ENCODE measurements at regions of chr5 and their contacts with region 1.

Region 1: GRCh38 chr5:141878711-141879425 is 658 bp upstream of the PCDH1 start:
- DNase-seq: peak; percentile 95
- ATAC-seq: peak; percentile 93

Region 2: GRCh38 chr5:141701360-141702119 is 177.3 kb before region 1 on chr5:
- intact Hi-C with region 1: loop called (anchors 5 kb)
- DNase-seq: no peak
- ATAC-seq: no peak

Region 3: GRCh38 chr5:141968914-141969608 is 90.2 kb after region 1 on chr5 and contains the start of gene RNF14:
- intact Hi-C with region 1: loop called (anchors 10 kb)
- DNase-seq: peak; percentile 95
- ATAC-seq: peak; percentile 99
- total RNA-seq, gene RNF14: 58.1 TPM

Measured in sciatic nerve (tissue), 2 donors.